Ovary (tissue), 10 donors: ENCODE measurements at regions of chr15 and their contacts with region 1.

Region 1: DNA sequence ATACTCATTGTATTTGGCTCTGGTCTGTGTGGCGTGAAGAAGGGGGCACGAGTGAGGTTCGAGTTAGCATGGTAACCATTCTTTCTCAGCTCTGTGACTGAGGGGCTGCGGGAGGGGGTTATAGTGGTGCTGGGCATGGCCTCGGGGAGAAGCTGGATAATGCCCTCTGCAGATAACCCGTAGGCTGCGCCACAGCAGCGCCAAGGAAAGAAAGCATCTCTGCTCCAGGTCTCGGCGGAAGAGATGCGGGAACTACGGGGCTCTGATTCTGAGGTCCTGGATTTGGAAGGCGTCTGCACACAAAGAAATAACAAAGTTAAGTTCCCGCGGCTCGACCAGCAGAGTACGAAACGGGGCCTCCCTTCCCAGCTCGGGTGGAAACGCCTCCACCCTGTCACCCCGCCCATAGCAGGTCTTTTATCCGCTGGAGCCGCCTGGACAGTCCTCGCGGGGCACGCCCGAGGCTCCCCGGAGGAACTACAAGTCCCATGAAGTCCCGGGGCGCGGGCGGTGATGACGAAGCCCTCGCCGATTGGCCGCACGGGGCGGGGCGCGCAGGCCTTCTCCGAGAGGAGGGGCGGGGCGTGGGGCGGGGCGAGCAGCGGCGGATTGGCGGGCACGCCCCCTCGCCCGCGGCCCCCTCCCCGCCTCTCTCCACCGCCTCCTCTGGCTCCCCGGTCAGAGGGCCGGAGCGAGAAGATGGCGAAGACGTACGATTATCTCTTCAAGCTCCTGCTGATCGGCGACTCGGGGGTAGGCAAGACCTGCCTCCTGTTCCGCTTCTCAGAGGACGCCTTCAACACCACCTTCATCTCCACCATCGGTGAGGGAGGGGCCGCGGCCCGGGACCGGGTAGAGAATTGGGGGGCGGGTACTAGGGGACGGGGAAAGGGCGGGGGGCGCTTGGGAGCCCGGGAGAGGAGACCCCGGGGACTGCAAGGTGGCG is at the start of gene RAB8B:
- DNase-seq: peak; percentile 98 to 99 (median 99)
- H3K4me3 ChIP-seq: peak within 1 kb of the TSS; percentile 91
- H3K27ac ChIP-seq: peak within 1 kb of the TSS in 1 of 2 donors; percentile 58
- H3K4me1 ChIP-seq: peaks cover 7% of the 10 kb centered on the region
- H3K27me3 ChIP-seq: no peaks in the 10 kb centered on the region
- CTCF ChIP-seq: no peak
- EP300 ChIP-seq: no peak
- POLR2A ChIP-seq: peak; percentile 76
- total RNA-seq, gene RAB8B: 23.1 to 58.0 (median 48.5) TPM

Region 2: GRCh38 chr15:63277038-63277892 is 88.1 kb after region 1 on chr15 and contains the start of gene APH1B:
- intact Hi-C with region 1: loop called in 1 of 4 experiments (anchors 10 kb)
- DNase-seq: peak; percentile 82 to 92 (median 88)
- H3K4me3 ChIP-seq: peak within 1 kb of the TSS; percentile 76
- H3K27ac ChIP-seq: peak within 1 kb of the TSS; percentile 90 to 94
- H3K4me1 ChIP-seq: peaks cover 5% of the 10 kb centered on the region
- H3K27me3 ChIP-seq: no peaks in the 10 kb centered on the region
- CTCF ChIP-seq: peak in 1 of 3 donors; percentile 19
- EP300 ChIP-seq: peak; percentile 14
- POLR2A ChIP-seq: peak; percentile 27
- total RNA-seq, gene APH1B: 13.2 to 25.2 (median 22.6) TPM